A673 (cell line): ENCODE measurements at regions of chr6 and their contacts with region 1.

Region 1: DNA sequence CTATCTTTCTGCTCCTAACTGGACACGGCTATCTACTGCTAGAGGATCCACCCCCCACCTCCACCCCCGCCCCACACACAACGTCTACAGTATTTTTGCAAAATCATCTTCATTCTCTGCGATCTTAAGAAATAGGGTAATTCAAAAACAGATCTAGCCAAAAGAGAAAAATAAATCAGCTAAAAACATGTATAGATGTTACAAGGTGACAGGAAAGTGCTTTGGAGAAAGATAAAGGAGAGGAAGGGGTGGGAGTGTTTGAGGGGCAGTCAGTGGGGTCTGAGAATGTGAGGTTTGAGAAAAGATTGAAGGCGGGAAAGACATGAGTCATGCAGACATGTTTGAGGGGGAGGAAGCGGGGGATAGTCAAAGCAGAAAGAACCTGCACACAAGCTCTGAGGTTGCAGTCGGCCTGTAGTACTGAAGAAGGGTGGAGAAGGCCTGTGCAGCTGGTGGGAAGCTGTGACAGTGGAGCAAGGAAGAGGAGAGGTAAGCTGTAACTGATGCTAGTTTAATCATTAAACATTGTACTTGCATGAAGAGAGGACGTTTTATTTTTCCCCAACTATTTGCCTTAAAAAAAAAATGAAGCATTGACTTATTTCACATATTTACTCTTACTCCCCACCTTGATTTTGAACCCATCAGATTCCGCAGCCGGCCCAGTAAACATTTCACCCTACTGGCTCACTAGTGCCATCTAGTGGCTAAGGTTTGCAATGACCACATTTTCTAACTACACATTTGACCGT is 332.6 kb downstream of the ADGRB3 start:
- DNase-seq: peak; percentile 84
- H3K4me3 ChIP-seq: no peak overlapping the region
- H3K27ac ChIP-seq: no peak overlapping the region
- H3K4me1 ChIP-seq: peaks cover 12% of the 10 kb centered on the region
- H3K27me3 ChIP-seq: no peaks in the 10 kb centered on the region
- CTCF ChIP-seq: peak; percentile 90

Region 2: GRCh38 chr6:68559070-68559469 is 408.7 kb before region 1 on chr6:
- CTCF ChIA-PET with region 1: no interaction called
- POLR2A ChIA-PET with region 1: no interaction called
- intact Hi-C with region 1: loop called (anchors 5 kb)
- DNase-seq: peak; percentile 79
- H3K4me3 ChIP-seq: peak overlapping the region; percentile 38
- H3K27ac ChIP-seq: peak overlapping the region; percentile 87
- H3K4me1 ChIP-seq: peaks cover 23% of the 10 kb centered on the region
- H3K27me3 ChIP-seq: no peaks in the 10 kb centered on the region
- CTCF ChIP-seq: peak; percentile 69; the same call in 1 of the 2 replicates

Region 3: GRCh38 chr6:68572525-68572924 is 395.2 kb before region 1 on chr6:
- CTCF ChIA-PET with region 1: no interaction called
- POLR2A ChIA-PET with region 1: no interaction called
- intact Hi-C with region 1: loop called (anchors 1 kb)
- DNase-seq: peak; percentile 87
- H3K4me3 ChIP-seq: no peak overlapping the region
- H3K27ac ChIP-seq: no peak overlapping the region
- H3K4me1 ChIP-seq: no peaks in the 10 kb centered on the region
- H3K27me3 ChIP-seq: no peaks in the 10 kb centered on the region
- CTCF ChIP-seq: peak; percentile 72

Region 4: DNA sequence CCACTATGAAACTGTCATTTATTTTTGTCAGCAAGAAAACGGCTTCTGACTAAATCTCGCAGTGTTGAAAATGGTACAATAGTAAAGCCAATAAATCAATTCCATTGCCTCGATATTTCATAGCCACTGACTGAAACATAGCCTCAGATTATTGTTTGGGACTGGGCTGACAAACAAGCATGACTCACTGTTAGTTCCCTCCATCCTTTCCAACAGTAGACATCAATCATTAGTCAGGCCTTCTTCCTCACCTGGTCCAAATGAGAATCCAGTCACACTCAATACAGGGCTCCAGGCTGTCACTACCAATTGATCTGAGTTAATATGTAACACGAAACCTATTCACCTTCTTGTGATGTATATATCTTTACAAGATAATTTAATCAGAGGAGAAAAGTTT is 266.6 kb before region 1 on chr6:
- CTCF ChIA-PET with region 1: no interaction called
- POLR2A ChIA-PET with region 1: no interaction called
- intact Hi-C with region 1: no loop called
- DNase-seq: no peak
- H3K4me3 ChIP-seq: no peak overlapping the region
- H3K27ac ChIP-seq: no peak overlapping the region
- H3K4me1 ChIP-seq: peaks cover 21% of the 10 kb centered on the region
- H3K27me3 ChIP-seq: no peaks in the 10 kb centered on the region
- CTCF ChIP-seq: no peak

Region 5: GRCh38 chr6:68778356-68779020 is 189.2 kb before region 1 on chr6:
- CTCF ChIA-PET with region 1: no interaction called
- POLR2A ChIA-PET with region 1: no interaction called
- intact Hi-C with region 1: loop called (anchors 2 kb)
- DNase-seq: peak; percentile 87
- H3K4me3 ChIP-seq: no peak overlapping the region
- H3K27ac ChIP-seq: no peak overlapping the region
- H3K4me1 ChIP-seq: peaks cover 41% of the 10 kb centered on the region
- H3K27me3 ChIP-seq: no peaks in the 10 kb centered on the region
- CTCF ChIP-seq: peak; percentile 90

Region 6: GRCh38 chr6:70107852-70108629 is 1140.3 kb after region 1 on chr6:
- CTCF ChIA-PET with region 1: no interaction called
- POLR2A ChIA-PET with region 1: no interaction called
- intact Hi-C with region 1: loop called (anchors 10 kb)
- DNase-seq: peak; percentile 72
- H3K4me3 ChIP-seq: no peak overlapping the region
- H3K27ac ChIP-seq: no peak overlapping the region
- H3K4me1 ChIP-seq: peaks cover 9% of the 10 kb centered on the region
- H3K27me3 ChIP-seq: no peaks in the 10 kb centered on the region
- CTCF ChIP-seq: peak; percentile 81